CD4-positive, alpha-beta T cell (primary cell): ENCODE measurements at regions of chr6 and their contacts with region 1.

Region 1: DNA sequence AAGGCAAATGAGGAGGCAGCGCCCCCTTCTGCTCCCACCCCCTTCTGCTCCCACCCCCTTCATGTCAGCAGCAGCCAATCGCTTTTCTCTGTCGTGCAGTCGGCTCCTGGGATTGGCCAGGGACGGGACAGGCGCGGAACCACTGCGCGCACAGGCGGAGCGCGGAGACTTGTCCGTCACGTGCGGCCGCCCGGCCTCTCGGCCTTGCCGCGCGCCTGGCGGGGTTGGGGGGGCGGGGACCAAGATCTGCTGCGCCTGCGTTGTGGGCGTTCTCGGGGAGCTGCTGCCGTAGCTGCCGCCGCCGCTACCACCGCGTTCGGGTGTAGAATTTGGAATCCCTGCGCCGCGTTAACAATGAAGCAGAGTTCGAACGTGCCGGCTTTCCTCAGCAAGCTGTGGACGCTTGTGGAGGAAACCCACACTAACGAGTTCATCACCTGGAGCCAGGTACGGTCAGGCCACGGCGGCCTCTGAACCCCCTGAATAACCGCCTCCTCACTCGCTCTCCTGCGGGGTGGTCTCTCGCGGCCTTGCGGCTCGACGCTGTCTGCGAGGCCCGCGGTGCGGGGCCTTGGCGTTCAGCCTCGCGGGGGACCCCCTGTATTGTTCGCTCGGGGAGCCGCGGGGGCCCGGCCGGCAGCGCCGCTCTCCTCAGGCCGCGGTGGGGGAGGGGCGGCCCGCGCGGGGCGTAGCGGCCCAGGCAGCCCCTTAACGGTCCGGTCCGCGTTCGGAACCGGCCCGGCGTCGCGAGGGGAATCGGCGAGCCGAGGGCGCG is at the start of gene HSF2:
- DNase-seq: peak; percentile 86 to 98 (median 91)
- ATAC-seq: peak; percentile 94
- H3K4me3 ChIP-seq: peak within 1 kb of the TSS; percentile 94
- H3K4me3 Mint-ChIP-seq: peak within 1 kb of the TSS; percentile 100
- H3K27ac ChIP-seq: peak within 1 kb of the TSS; percentile 70 to 89
- H3K27ac Mint-ChIP-seq: peak within 1 kb of the TSS; percentile 86
- H3K4me1 ChIP-seq: peaks cover 12% of the 10 kb centered on the region
- H3K4me1 Mint-ChIP-seq: peaks cover 42% of the 10 kb centered on the region
- H3K27me3 ChIP-seq: no peaks in the 10 kb centered on the region
- H3K27me3 Mint-ChIP-seq: no peaks in the 10 kb centered on the region
- CTCF ChIP-seq: peak; percentile 24
- total RNA-seq, gene HSF2: 41.8 to 47.6 TPM

Region 2: DNA sequence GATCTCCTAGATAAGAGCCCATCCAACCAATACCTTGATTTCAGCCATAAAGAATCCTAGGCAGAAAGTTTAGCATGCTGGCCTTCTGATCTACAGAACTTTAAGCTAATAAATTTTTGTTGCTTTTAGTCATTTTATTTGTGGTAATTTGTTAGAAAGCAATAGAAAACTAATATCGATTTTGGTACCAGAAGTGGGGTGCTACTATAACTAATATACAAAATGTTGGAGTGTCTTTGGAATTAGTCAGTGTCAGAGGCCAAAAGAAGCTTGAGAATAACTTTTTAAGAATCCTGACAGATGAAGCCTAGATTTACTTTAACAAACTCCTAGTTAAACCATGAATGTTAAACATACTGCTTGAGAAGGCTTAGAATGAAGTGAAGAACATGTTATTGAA is 83.7 kb before region 1 on chr6:
- CTCF ChIA-PET with region 1: no interaction called
- POLR2A ChIA-PET with region 1: no interaction called
- intact Hi-C with region 1: no loop called
- DNase-seq: no peak
- ATAC-seq: no peak
- H3K4me3 ChIP-seq: no peak overlapping the region
- H3K4me3 Mint-ChIP-seq: no peak overlapping the region
- H3K27ac ChIP-seq: no peak overlapping the region
- H3K27ac Mint-ChIP-seq: no peak overlapping the region
- H3K4me1 ChIP-seq: no peaks in the 10 kb centered on the region
- H3K4me1 Mint-ChIP-seq: no peaks in the 10 kb centered on the region
- H3K27me3 ChIP-seq: no peaks in the 10 kb centered on the region
- H3K27me3 Mint-ChIP-seq: peaks cover 14% of the 10 kb centered on the region
- CTCF ChIP-seq: no peak

Region 3: DNA sequence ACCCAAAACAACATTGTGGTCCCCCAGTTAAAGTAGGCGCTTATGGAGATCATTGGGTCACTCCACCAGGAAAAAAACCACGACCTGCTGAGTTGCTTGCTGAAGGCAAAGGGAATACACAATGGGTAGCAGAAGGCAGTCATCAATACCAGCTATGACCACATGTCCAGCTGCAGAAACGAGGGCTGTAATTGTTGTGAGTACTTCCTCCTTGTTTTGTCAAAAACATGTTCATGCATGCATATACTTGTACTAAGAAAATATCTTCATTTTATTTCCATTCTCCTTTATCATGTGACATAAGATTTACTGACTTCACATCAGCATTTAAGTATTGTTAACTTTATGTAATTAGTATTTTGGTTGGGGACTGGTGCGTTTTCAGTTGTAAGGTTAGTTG is 55.1 kb after region 1 on chr6:
- CTCF ChIA-PET with region 1: interaction called, 4 read pairs
- POLR2A ChIA-PET with region 1: interaction called, 4 read pairs
- intact Hi-C with region 1: loop called in 1 of 2 experiments (anchors 5 kb)
- DNase-seq: no peak
- ATAC-seq: no peak
- H3K4me3 ChIP-seq: no peak overlapping the region
- H3K4me3 Mint-ChIP-seq: no peak overlapping the region
- H3K27ac ChIP-seq: no peak overlapping the region
- H3K27ac Mint-ChIP-seq: peak overlapping the region; percentile 32
- H3K4me1 ChIP-seq: peaks cover 3% of the 10 kb centered on the region
- H3K4me1 Mint-ChIP-seq: peaks cover 70% of the 10 kb centered on the region
- H3K27me3 ChIP-seq: no peaks in the 10 kb centered on the region
- H3K27me3 Mint-ChIP-seq: no peaks in the 10 kb centered on the region
- CTCF ChIP-seq: no peak